PC-3 (cell line): ENCODE measurements at regions of chr3 and their contacts with region 1.

Region 1: DNA sequence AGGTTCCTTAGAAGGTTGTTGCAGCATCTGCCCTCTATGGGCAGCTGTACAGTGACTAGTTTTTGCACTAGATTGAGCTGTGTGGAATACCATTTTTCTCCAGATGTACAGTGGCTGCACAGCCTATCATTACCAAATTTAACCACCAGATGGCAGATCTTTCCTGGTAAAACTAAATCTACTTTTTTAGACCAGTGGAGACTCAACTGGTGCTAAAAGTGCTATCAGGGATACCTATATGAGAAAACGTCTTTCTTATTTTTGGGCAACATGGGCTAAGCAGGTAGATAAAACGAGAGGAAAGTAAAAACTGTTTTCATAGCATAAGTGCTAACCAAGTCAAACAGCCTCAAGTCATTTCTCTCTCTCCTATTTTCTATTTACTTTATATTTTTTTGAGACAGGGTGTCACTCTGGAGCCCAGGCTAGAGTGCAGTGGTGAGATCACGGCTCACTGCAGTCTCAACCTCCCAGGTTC is 21.2 kb downstream of the IGSF10 start:
- DNase-seq: peak; percentile 94
- ATAC-seq: peak; percentile 92
- H3K4me3 ChIP-seq: no peak overlapping the region
- H3K27ac ChIP-seq: no peak overlapping the region
- H3K4me1 ChIP-seq: peaks cover 29% of the 10 kb centered on the region
- H3K27me3 ChIP-seq: no peaks in the 10 kb centered on the region
- CTCF ChIP-seq: peak; percentile 91

Region 2: DNA sequence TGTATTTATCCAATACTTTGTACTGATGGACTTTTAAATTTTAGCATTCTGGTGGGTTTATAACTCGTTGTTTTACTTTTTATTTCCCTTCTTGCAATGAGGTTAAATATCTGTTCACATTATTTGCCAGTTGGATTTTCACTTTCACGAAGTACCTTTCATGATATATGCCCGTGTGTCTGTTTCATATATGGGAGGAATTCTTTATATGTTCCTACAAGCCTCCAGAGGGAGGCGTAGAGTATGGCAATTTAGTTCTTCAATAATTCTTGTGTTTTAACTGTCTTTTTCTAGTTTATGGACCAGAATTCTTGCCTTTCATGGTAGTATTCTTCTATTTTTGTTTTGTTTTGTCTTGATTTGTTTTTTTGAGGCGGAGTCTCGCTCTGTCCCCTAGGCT is 1513.8 kb before region 1 on chr3:
- CTCF ChIA-PET with region 1: interaction called, 15 read pairs
- POLR2A ChIA-PET with region 1: no interaction called
- intact Hi-C with region 1: no loop called
- DNase-seq: no peak
- ATAC-seq: no peak; the same call in 1 of the 2 replicates
- H3K4me3 ChIP-seq: no peak overlapping the region
- H3K27ac ChIP-seq: no peak overlapping the region
- H3K4me1 ChIP-seq: no peaks in the 10 kb centered on the region
- H3K27me3 ChIP-seq: no peaks in the 10 kb centered on the region
- CTCF ChIP-seq: peak; percentile 38; the same call in 1 of the 2 replicates

Region 3: DNA sequence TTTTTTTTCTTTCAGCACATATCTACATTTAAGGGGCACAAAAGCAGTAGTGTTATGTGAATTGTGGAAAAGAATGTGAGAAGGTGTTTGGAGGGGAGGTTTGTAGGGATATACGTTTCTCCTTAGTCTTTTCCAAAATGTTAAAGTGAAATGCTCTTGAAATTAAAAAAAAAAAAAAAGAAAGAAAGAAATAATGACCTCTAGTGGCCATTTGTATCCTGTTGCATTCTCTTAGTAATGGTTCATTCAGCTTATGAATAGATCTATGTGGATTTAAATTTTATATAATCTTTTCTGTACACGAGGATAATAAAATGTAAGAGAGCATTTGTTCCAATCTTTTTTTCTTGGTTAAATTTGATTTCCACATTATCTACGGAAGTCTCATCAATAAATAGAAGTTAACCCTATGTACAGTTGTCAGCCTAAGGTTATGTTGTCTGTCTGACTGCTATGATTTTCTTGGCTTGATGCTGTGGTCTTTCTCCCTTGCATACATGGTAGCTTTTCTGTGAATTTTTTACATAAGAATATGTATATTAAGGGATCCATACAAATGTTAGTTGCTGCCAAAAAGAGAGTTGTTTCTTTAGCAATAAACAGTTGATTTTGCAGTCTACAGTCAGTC is 112.0 kb before region 1 on chr3:
- CTCF ChIA-PET with region 1: no interaction called
- POLR2A ChIA-PET with region 1: no interaction called
- intact Hi-C with region 1: loop called (anchors 1 kb)
- DNase-seq: peak; percentile 64
- ATAC-seq: peak; percentile 68
- H3K4me3 ChIP-seq: no peak overlapping the region
- H3K27ac ChIP-seq: no peak overlapping the region
- H3K4me1 ChIP-seq: peaks cover 18% of the 10 kb centered on the region
- H3K27me3 ChIP-seq: no peaks in the 10 kb centered on the region
- CTCF ChIP-seq: peak; percentile 79

Region 4: GRCh38 chr3:151379083-151379734 is 60.5 kb before region 1 on chr3:
- CTCF ChIA-PET with region 1: interaction called, 10 read pairs
- POLR2A ChIA-PET with region 1: no interaction called
- intact Hi-C with region 1: no loop called
- DNase-seq: peak; percentile 57
- ATAC-seq: peak; percentile 97
- H3K4me3 ChIP-seq: no peak overlapping the region
- H3K27ac ChIP-seq: no peak overlapping the region
- H3K4me1 ChIP-seq: no peaks in the 10 kb centered on the region
- H3K27me3 ChIP-seq: no peaks in the 10 kb centered on the region
- CTCF ChIP-seq: peak; percentile 88

Region 5: GRCh38 chr3:151468284-151468917 is 28.7 kb after region 1 on chr3:
- CTCF ChIA-PET with region 1: interaction called, 4 read pairs
- POLR2A ChIA-PET with region 1: no interaction called
- intact Hi-C with region 1: loop called (anchors 2 kb)
- DNase-seq: peak; percentile 90
- ATAC-seq: peak; percentile 98
- H3K4me3 ChIP-seq: no peak overlapping the region
- H3K27ac ChIP-seq: no peak overlapping the region
- H3K4me1 ChIP-seq: no peaks in the 10 kb centered on the region
- H3K27me3 ChIP-seq: no peaks in the 10 kb centered on the region
- CTCF ChIP-seq: peak; percentile 93

Region 6: GRCh38 chr3:151660885-151661284 is 221.2 kb after region 1 on chr3:
- CTCF ChIA-PET with region 1: interaction called, 3 read pairs
- POLR2A ChIA-PET with region 1: no interaction called
- intact Hi-C with region 1: loop called (anchors 1 kb)
- DNase-seq: peak; percentile 56
- ATAC-seq: no peak
- H3K4me3 ChIP-seq: no peak overlapping the region
- H3K27ac ChIP-seq: no peak overlapping the region
- H3K4me1 ChIP-seq: no peaks in the 10 kb centered on the region
- H3K27me3 ChIP-seq: no peaks in the 10 kb centered on the region
- CTCF ChIP-seq: peak; percentile 61

Region 7: DNA sequence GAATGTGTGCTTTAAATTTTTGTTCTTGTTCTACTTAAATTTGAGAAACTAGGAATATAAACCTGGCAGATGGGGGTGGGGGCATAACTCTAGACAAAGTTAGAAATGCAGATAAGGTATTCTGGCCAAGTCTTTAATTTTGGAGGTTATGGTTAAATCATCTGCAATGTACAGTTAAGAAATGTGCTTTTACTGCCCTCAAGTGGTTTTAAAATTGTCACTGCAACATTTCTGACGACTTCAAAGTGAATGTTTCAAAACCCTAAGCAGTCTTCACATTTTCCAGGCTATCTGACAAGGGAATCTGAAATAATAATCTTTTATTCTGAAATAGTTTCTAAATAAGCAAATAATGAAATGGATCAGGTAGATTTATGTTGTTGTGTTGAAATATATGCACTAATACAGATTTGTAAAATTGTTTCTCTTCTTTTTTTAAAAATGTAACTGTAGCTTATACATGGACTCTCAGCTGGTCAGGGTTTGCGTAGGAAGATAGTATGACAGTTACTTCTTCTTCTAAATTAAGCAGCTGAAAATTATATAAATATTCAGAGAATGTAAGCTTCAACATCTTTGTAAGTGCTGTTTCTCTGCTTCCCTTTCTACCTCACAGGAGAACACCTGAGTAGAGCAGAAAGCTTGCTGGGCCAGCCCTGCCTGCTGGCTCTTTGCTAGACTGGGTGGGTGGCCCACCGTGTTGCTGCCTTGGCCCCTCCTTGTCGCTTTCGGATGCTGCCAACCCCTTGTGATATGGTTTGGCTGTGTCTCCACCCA is 478.8 kb after region 1 on chr3:
- CTCF ChIA-PET with region 1: interaction called, 6 read pairs
- POLR2A ChIA-PET with region 1: interaction called, 3 read pairs
- intact Hi-C with region 1: loop called (anchors 1 kb)
- DNase-seq: peak; percentile 79
- ATAC-seq: peak; percentile 91
- H3K4me3 ChIP-seq: no peak overlapping the region
- H3K27ac ChIP-seq: no peak overlapping the region
- H3K4me1 ChIP-seq: peaks cover 8% of the 10 kb centered on the region
- H3K27me3 ChIP-seq: no peaks in the 10 kb centered on the region
- CTCF ChIP-seq: peak; percentile 85